ENCODE measurements at regions of chr7 and their contacts with region 1.

Region 1: GRCh38 chr7:139731802-139732470 is 45.9 kb downstream of the HIPK2 start:
- DNase-seq: peak; percentile 79
- ATAC-seq: peak; percentile 87
- H3K4me3 ChIP-seq: peak overlapping the region; percentile 5 to 48; a peak in 3 of 4 replicates
- H3K27ac ChIP-seq: peak overlapping the region; percentile 26; the same call in 1 of the 2 replicates
- H3K4me1 ChIP-seq: peaks cover 22 to 39% of the 10 kb centered on the region in 2 experiments
- H3K27me3 ChIP-seq: no peaks in the 10 kb centered on the region
- CTCF ChIP-seq: no peak
- POLR2A ChIP-seq: no peak
- RAD21 ChIP-seq: 0 out of 2 replicates have a peak, but pooled peaks have one; percentile 7

Region 2: DNA sequence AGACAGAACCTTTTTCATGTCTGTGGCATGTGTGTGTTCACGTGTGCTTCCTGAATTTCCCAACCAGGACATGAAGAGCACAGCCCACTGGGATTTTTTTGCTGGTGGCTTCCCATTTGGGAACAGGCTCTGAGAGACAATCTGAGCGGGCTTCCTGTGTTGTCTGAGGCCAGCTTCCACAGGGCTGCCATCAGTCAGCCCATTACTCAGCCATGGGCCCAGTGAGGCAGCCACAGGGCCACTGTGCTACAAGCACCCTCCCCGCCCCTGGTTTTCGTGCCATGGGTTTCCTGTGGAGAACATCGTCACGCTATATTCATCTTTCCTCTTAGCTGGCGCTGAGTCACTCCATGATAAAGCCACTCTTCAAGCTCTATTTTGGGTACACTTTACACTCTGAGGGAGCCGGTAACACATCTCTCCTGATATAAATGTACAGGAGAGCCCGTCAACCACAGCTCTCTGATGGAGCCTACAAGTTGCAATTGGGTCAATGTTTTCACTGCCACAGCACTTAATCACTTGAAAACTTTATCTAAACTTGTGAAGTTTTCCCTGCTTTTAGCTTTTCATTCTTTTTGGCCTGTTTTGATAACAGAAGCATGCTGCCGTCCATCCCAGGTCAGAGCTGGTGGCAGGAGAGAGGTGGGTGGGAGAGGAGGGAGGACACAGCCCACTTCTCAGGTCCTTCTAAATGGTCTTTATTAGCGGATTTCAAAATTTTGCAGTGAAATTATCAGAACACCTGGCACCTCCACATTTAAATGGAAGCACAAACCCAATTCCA is 51.1 kb before region 1 on chr7:
- CTCF ChIA-PET with region 1: no interaction called
- POLR2A ChIA-PET with region 1: no interaction called
- RAD21 ChIA-PET with region 1: no interaction called
- intact Hi-C with region 1: loop called (anchors 5 kb)
- DNase-seq: peak; percentile 92
- ATAC-seq: peak; percentile 72
- H3K4me3 ChIP-seq: peak overlapping the region; percentile 13 to 47; a peak in 3 of 4 replicates
- H3K27ac ChIP-seq: peak overlapping the region; percentile 87
- H3K4me1 ChIP-seq: peaks cover 45 to 67% of the 10 kb centered on the region in 2 experiments
- H3K27me3 ChIP-seq: no peaks in the 10 kb centered on the region
- CTCF ChIP-seq: no peak
- POLR2A ChIP-seq: no peak
- RAD21 ChIP-seq: 0 out of 2 replicates have a peak, but pooled peaks have one; percentile 31

Region 3: GRCh38 chr7:139762886-139763285 is 30.9 kb after region 1 on chr7:
- CTCF ChIA-PET with region 1: no interaction called
- POLR2A ChIA-PET with region 1: no interaction called
- RAD21 ChIA-PET with region 1: no interaction called
- intact Hi-C with region 1: no loop called
- DNase-seq: no peak
- ATAC-seq: no peak
- H3K4me3 ChIP-seq: no peak overlapping the region
- H3K27ac ChIP-seq: no peak overlapping the region
- H3K4me1 ChIP-seq: peaks cover 0 to 12% of the 10 kb centered on the region in 2 experiments; a peak in 2 of 4 replicates
- H3K27me3 ChIP-seq: no peaks in the 10 kb centered on the region
- CTCF ChIP-seq: no peak
- POLR2A ChIP-seq: no peak
- RAD21 ChIP-seq: no peak